Activated T-helper 2 cell treated with anti-CD3 and anti-CD28 coated beads, Interferon-gamma antibody, Interleukin-2, Interleukin-4, amounts not matched to agents 10 μg/mL and 5 μg/mL and 100 μg/mL, durations not matched to agents 14 hours and 24 hours and 36 hours (primary cell): ENCODE measurements at regions of chr4 and their contacts with region 1.

Region 1: DNA sequence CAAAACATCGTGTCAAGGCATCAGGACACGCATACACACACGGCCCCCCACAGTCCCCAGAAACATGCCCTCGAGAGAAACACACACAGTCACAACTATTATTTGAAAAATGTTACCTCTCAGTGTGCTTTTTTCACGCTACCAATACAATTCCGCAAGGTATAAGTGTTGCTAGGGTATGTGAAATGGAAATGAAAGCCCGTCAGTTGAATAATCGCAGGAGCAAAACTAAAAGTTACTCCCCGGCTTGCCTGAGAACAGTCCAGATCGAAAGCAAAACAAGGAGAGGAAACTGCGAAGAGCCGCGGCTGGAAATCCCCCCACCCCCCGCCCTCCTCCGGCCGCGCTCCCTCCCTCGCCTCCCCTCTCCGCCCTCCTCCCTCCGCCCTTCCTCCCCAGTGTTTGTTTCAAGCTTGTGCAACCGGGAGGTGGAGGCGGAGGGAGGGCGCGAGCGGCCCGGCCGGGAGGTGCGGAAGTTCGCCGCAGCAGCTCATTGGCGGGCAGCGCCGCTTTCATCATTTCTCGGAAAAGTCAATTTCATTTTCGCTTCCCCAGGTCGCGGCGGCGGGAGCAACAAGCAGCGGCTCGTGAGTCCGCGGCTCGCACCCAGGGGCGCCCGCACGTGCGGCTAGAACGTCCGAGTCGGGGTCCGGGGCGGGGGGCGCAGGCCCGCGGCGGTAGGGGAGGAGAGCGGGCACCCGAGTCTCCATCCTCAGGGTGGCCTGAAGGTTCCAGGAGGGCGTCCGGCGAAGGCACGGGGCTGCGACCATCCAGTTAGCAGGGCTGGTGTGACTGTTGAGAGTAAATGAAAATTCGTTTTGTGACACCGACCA is at the start of gene IRF2:
- DNase-seq: peak; percentile 96
- H3K4me3 Mint-ChIP-seq: peak within 1 kb of the TSS; percentile 95
- H3K27ac Mint-ChIP-seq: peak within 1 kb of the TSS; percentile 96
- H3K4me1 Mint-ChIP-seq: peaks cover 46% of the 10 kb centered on the region
- H3K27me3 Mint-ChIP-seq: no peaks in the 10 kb centered on the region
- total RNA-seq, gene IRF2: 47.6 and 53.2 TPM in 2 replicates

Region 2: DNA sequence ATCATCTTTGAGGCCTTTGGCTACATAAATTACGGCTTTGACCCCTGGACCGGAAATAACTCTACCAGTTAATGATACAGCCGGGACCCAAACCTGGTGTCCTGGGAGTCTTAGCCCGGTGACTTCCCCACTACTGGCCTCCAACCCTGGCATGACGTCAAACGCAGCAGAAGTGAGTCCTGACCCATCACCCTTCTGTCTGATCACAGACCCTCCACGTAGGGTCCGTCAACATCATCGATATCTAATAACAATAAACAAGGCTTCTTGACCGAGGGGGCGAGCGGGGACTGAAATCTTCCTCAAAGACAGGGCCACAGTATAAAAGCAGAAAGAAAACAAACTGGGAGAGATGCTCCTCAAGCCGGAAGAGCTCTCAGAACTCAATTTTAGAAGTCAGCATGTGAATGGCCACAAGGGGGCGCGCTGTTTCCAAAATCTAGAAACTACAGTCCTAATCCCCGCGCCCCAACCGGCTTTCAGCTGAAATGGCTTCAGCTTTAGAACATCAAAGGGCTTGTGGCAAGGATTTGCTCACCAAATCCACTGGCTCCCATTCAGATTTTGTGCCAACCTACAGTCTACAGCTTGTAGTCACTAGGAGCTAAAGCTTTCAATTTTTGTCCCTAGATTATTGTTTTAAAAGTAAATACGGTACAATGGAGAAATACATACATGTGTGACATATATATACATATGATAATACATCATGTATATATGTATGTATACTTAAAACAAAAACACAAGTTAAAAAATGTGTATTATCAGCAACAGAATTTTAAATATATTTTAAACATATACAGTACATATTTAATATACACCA is 210.4 kb before region 1 on chr4:
- intact Hi-C with region 1: loop called (anchors 1 kb)
- DNase-seq: peak; percentile 85
- H3K4me3 Mint-ChIP-seq: no peak overlapping the region
- H3K27ac Mint-ChIP-seq: peak overlapping the region; percentile 54
- H3K4me1 Mint-ChIP-seq: peaks cover 54% of the 10 kb centered on the region
- H3K27me3 Mint-ChIP-seq: no peaks in the 10 kb centered on the region

Region 3: DNA sequence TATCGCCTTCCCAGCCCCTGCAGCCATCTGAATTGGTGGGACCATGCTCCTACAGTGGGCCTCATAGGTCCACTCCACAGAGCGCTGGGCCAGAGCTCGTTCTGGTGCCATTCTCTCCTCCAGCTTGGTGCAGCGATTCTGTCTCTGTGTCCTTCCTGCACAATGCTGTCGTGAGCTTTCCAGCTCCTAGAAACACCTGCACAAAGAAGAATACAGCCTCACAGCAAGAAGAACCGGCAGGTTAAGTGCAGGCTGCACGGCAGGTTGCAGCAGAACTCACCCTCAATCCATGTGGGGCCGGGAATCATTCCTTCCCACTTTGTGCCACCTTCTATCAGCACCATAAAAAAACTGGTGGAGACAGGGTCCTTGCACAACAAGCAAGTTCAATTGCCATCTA is 155.6 kb before region 1 on chr4:
- intact Hi-C with region 1: loop called (anchors 1 kb)
- DNase-seq: peak; percentile 8
- H3K4me3 Mint-ChIP-seq: no peak overlapping the region
- H3K27ac Mint-ChIP-seq: peak overlapping the region; percentile 24
- H3K4me1 Mint-ChIP-seq: peaks cover 44% of the 10 kb centered on the region
- H3K27me3 Mint-ChIP-seq: no peaks in the 10 kb centered on the region

Region 4: GRCh38 chr4:184514121-184514988 is 39.9 kb after region 1 on chr4:
- intact Hi-C with region 1: loop called (anchors 1 kb)
- DNase-seq: peak; percentile 53
- H3K4me3 Mint-ChIP-seq: peak overlapping the region; percentile 66
- H3K27ac Mint-ChIP-seq: peak overlapping the region; percentile 90
- H3K4me1 Mint-ChIP-seq: peaks cover 51% of the 10 kb centered on the region
- H3K27me3 Mint-ChIP-seq: no peaks in the 10 kb centered on the region

Region 5: DNA sequence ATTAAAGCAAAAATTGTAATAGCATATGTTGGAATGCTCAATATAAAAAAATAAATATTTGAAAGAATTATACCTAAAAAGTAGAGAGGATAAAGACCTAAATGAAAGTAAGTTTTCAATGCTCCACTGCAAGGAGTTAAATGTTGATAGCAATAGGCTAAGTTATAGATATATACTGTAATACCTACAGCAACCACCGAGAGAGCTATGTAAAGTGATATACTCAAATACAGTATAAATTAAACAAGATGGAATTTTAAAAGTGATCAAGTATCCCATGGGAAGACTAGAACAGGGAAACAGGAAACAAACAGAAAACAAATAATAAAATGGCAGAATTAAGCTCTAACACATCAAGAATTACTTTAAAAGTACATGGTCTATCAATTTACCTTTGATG is 100.8 kb after region 1 on chr4:
- intact Hi-C with region 1: loop called (anchors 2 kb)
- DNase-seq: no peak
- H3K4me3 Mint-ChIP-seq: no peak overlapping the region
- H3K27ac Mint-ChIP-seq: peak overlapping the region; percentile 75
- H3K4me1 Mint-ChIP-seq: peaks cover 18% of the 10 kb centered on the region
- H3K27me3 Mint-ChIP-seq: no peaks in the 10 kb centered on the region

Region 6: GRCh38 chr4:184649026-184649970 is 174.8 kb after region 1 on chr4 and contains the starts of genes CASP3 and PRIMPOL:
- intact Hi-C with region 1: loop called (anchors 1 kb)
- DNase-seq: peak; percentile 96
- H3K4me3 Mint-ChIP-seq: peak within 1 kb of the TSS; percentile 95
- H3K27ac Mint-ChIP-seq: peak within 1 kb of the TSS; percentile 88
- H3K4me1 Mint-ChIP-seq: peaks cover 52% of the 10 kb centered on the region
- H3K27me3 Mint-ChIP-seq: no peaks in the 10 kb centered on the region
- total RNA-seq, gene CASP3: 90.9 and 94.1 TPM in 2 replicates
- total RNA-seq, gene PRIMPOL: 16.2 and 17.6 TPM in 2 replicates

Region 7: GRCh38 chr4:185227131-185227551 is 752.7 kb after region 1 on chr4:
- intact Hi-C with region 1: no loop called
- DNase-seq: no peak
- H3K4me3 Mint-ChIP-seq: no peak overlapping the region
- H3K27ac Mint-ChIP-seq: no peak overlapping the region
- H3K4me1 Mint-ChIP-seq: peaks cover 4% of the 10 kb centered on the region
- H3K27me3 Mint-ChIP-seq: no peaks in the 10 kb centered on the region